ENCODE measurements at regions of chr14 and their contacts with region 1.

Region 1: GRCh38 chr14:104768437-104769323 is 15.7 kb downstream of the SIVA1 start:
- DNase-seq: no peak
- H3K4me3 ChIP-seq: no peak overlapping the region
- CTCF ChIP-seq: peak; percentile 97

Region 2: GRCh38 chr14:104752735-104753531 is 15.7 kb before region 1 on chr14 and contains the start of gene SIVA1:
- CTCF ChIA-PET with region 1: interaction called, 49 read pairs
- POLR2A ChIA-PET with region 1: interaction called, 5 read pairs
- DNase-seq: peak; percentile 85
- H3K4me3 ChIP-seq: peak within 1 kb of the TSS; percentile 98
- CTCF ChIP-seq: no peak

Region 3: DNA sequence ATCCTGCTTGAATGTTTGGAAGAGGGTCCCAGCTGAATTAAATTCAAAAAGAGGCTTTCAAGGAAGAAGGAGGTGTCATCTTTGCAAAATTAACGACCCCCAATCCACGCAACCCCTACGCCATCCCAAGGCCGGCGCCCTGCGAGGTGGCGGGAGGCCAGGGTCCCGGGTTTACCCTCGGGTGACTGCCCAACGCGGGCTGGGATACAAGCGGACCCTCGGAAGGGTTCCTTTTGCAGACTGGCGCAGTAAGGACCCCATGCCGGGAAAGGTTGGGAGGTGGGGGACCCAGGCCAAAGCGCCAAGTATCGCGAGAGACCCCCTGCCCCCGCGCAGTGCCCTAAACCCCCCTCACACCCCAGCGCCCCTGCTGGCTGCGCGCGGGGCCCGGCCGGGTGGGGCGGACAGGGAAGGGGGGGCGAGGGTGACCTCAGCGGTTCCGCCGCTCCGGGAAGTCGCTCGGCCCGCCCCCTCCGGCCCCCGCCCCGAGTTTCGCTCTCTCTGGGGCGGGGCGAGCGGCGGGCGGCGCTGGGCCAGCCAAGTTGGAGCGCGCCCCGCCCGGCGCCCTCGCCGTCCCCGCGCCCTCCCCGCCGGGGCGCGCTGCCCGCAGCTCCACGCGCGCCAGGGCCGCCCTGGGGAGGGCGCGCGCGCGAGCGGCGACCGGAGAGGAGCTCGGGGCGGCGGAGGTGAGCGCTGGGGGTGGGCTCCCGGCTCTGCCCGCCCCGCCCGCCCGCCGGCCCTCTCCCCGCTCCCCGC is 31.5 kb after region 1 on chr14:
- CTCF ChIA-PET with region 1: interaction called, 52 read pairs
- POLR2A ChIA-PET with region 1: no interaction called
- DNase-seq: no peak
- H3K4me3 ChIP-seq: peak overlapping the region; percentile 64
- CTCF ChIP-seq: peak; percentile 76

Region 4: DNA sequence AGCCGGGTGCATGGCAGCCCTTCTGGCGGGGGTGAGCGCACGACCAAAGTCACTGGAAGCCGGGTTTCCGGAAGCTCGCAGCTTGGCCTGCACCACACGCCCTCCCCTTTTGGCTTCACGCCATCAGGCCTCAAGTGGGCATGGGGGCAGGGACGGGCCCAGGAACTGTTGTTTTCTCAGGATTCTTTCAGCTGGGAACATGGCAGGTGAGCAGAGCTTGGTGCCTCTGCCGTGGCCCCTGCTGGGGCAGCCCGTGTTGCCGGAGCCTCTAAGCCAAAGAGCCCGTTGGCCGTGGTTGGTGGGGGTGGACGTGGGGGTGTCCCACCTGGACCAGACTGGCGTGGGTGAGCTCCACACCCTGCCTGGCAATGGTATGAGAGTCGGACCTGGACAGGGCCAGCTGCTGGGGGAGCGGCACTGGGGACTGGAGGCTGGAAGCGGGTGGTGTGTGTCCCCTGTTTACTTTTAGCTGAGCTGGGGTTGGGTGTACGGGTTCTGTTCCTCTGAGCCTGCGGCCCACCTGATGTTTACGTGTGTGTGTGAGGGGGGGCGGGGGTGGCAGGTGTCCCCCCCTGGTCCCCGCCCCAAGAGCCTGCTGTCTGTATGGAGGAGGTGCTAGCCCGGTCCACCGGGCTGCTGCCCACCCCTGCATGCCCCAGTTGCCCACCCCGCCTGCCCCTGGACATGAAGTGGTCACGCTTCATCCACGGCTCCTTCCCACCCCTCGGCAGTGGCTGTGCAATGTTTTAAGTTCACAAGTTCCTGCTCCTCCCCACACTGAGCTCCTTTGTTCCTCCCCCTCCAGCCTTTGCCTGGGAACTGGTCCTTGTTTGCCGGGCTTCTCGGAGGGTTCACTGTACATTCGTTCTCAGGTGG is 127.3 kb after region 1 on chr14:
- CTCF ChIA-PET with region 1: interaction called, 11 read pairs
- POLR2A ChIA-PET with region 1: no interaction called
- DNase-seq: no peak
- H3K4me3 ChIP-seq: no peak overlapping the region
- CTCF ChIP-seq: no peak